ENCODE measurements at regions of chr4 and their contacts with region 1.

Region 1: GRCh38 chr4:108172753-108173598 is 4.2 kb upstream of the LEF1 start:
- DNase-seq: peak; percentile 76
- H3K4me3 Mint-ChIP-seq: peak overlapping the region; percentile 85
- H3K27ac Mint-ChIP-seq: peak overlapping the region; percentile 87
- H3K4me1 Mint-ChIP-seq: peaks cover 40% of the 10 kb centered on the region
- H3K27me3 Mint-ChIP-seq: peaks cover 9% of the 10 kb centered on the region

Region 2: DNA sequence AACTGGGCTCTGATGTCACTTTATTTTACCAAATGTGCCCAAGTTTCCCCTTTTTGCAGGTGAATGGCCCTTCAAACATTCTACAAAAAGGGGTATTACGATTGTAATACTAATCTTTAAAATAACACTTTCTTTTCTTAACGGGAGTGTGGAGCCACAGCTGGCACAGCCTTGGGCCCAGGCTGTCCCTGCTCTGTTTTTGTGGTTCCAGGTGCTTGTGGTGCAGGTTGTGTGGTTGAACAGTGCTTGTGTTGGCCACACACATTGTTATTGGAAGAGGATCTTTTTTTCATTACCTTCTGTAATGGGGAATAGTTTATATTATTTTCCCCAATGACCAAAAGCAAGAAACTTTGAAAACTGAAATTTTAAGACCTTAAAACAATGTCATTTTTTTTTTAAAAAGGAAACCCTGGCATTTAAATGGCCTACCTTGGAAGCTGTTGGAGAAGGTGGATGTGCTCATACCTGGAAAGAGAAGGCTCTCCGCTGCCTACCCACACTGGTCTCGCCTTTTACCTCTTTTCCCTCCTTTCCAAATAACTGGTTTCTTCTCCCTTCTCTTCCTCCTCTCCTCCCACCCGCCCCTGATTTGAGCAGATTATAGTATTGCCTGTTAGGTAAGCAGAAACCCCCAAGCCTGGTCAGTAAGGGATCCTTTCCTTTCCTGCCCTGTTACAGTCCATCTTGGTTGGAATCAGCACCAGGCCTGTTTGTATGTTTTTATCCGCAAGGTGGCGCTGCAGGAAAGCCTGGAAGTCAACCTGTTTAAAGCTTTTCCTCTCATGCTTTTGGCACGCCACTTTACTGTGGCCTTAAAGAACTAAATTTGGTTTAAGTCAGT is 154.7 kb before region 1 on chr4:
- CTCF ChIA-PET with region 1: interaction called, 12 read pairs
- POLR2A ChIA-PET with region 1: no interaction called
- intact Hi-C with region 1: no loop called
- DNase-seq: peak; percentile 88
- H3K4me3 Mint-ChIP-seq: no peak overlapping the region
- H3K27ac Mint-ChIP-seq: no peak overlapping the region
- H3K4me1 Mint-ChIP-seq: peaks cover 8% of the 10 kb centered on the region
- H3K27me3 Mint-ChIP-seq: no peaks in the 10 kb centered on the region

Region 3: GRCh38 chr4:108058685-108059440 is 114.1 kb before region 1 on chr4:
- CTCF ChIA-PET with region 1: no interaction called
- POLR2A ChIA-PET with region 1: no interaction called
- intact Hi-C with region 1: no loop called
- DNase-seq: no peak
- H3K4me3 Mint-ChIP-seq: no peak overlapping the region
- H3K27ac Mint-ChIP-seq: no peak overlapping the region
- H3K4me1 Mint-ChIP-seq: peaks cover 44% of the 10 kb centered on the region
- H3K27me3 Mint-ChIP-seq: no peaks in the 10 kb centered on the region

Region 4: GRCh38 chr4:108355186-108355901 is 182.4 kb after region 1 on chr4:
- CTCF ChIA-PET with region 1: no interaction called
- POLR2A ChIA-PET with region 1: interaction called, 3 read pairs
- intact Hi-C with region 1: loop called (anchors 2 kb)
- DNase-seq: peak; percentile 24
- H3K4me3 Mint-ChIP-seq: no peak overlapping the region
- H3K27ac Mint-ChIP-seq: peak overlapping the region; percentile 55
- H3K4me1 Mint-ChIP-seq: peaks cover 52% of the 10 kb centered on the region
- H3K27me3 Mint-ChIP-seq: no peaks in the 10 kb centered on the region

Region 5: DNA sequence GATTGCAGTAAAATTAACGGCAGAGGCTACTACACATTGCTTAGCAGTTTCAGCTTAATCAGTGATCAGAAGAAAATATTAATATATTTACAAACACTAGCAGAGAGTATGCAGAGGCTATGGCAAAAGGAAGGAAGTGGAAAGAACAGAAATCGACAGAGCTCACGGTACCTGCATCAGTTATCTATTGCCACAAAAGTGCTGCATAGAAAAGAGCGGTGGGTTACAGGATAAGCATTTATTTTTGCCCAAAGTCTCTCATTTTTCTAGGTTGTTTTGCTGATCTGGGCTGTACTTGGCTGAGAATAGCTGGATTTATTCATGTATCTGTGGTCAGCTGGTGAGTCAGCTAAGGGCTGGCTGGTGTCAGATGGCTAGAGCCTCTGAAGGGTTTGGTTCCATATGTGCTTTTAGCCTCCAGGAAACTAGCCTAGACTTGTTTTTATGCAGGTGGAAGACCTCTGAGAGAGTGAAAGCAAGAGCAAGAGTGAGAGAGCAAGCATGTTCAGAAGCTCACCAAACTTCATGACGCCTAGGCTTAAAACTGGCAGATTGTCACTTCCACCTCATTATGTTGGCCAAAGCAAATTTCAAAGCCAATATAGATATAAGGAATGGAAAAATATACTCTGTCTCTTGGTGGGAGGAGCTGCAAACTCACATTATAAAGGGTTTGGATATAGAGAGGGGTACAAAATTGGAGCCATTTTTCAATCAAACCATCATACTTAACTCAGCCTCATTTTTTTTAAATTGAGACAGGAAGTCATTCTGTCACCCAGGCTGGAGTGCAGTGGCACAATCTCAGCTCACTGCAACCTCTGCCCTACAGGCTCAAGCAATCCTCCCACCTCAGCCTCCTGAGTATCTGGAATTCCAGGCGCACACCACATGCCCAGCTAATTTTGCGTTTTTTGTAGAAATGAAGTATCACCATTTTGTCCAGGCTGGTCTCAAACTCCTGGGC is 294.2 kb after region 1 on chr4:
- CTCF ChIA-PET with region 1: interaction called, 3 read pairs
- POLR2A ChIA-PET with region 1: no interaction called
- intact Hi-C with region 1: loop called (anchors 5 kb)
- DNase-seq: peak; percentile 47
- H3K4me3 Mint-ChIP-seq: peak overlapping the region; percentile 39
- H3K27ac Mint-ChIP-seq: peak overlapping the region; percentile 68
- H3K4me1 Mint-ChIP-seq: peaks cover 30% of the 10 kb centered on the region
- H3K27me3 Mint-ChIP-seq: no peaks in the 10 kb centered on the region

Region 6: GRCh38 chr4:108570993-108571569 is 398.1 kb after region 1 on chr4:
- CTCF ChIA-PET with region 1: interaction called, 5 read pairs
- POLR2A ChIA-PET with region 1: interaction called, 3 read pairs
- intact Hi-C with region 1: loop called (anchors 5 kb)
- DNase-seq: no peak
- H3K4me3 Mint-ChIP-seq: no peak overlapping the region
- H3K27ac Mint-ChIP-seq: no peak overlapping the region
- H3K4me1 Mint-ChIP-seq: peaks cover 7% of the 10 kb centered on the region
- H3K27me3 Mint-ChIP-seq: no peaks in the 10 kb centered on the region

Measured in activated CD4-positive, alpha-beta memory T cell treated with anti-CD3 and anti-CD28 coated beads for 36 hours (primary cell).